ENCODE measurements at regions of chr12 and their contacts with region 1.

Region 1: DNA sequence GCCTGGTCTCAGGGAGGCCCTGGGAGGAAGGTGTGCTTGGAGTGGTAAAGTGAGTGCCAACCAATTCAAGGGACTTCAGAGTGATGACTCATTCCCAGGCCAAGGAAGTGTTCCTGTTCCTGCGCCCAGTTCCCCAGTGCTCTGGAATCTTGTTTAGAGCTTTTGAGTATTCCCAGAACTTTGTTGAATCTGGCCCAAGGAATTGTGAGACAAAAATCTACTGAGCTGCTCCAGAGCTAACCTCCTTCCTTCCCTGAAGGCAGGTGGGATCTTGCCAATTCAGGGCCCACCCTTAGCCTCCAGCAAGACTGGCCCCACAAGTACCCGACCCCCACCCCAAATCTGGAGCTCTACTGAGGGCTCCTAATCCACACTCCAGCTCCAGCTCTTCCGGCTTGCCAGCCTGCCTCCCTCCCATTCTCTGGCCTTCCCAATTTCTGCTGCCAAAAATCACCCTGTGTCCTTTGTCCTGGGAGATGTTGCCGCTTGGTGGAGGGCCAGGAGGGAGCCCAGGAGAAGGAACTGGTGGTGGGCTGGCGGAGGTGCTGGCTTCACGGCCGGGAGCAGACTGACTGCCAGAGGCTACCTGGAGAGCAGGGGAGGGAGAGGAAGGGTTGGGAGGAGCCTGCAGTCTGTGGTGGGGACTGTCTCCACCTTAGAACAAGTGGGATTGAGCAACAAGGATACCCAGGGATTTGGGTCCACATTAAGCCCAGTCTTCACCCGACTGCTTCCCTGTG is 2.0 kb upstream of the ATN1 start:
- DNase-seq: no peak
- H3K4me3 ChIP-seq: no peak overlapping the region
- H3K27ac ChIP-seq: no peak overlapping the region
- H3K4me1 ChIP-seq: peaks cover 48% of the 10 kb centered on the region
- CTCF ChIP-seq: no peak

Region 2: DNA sequence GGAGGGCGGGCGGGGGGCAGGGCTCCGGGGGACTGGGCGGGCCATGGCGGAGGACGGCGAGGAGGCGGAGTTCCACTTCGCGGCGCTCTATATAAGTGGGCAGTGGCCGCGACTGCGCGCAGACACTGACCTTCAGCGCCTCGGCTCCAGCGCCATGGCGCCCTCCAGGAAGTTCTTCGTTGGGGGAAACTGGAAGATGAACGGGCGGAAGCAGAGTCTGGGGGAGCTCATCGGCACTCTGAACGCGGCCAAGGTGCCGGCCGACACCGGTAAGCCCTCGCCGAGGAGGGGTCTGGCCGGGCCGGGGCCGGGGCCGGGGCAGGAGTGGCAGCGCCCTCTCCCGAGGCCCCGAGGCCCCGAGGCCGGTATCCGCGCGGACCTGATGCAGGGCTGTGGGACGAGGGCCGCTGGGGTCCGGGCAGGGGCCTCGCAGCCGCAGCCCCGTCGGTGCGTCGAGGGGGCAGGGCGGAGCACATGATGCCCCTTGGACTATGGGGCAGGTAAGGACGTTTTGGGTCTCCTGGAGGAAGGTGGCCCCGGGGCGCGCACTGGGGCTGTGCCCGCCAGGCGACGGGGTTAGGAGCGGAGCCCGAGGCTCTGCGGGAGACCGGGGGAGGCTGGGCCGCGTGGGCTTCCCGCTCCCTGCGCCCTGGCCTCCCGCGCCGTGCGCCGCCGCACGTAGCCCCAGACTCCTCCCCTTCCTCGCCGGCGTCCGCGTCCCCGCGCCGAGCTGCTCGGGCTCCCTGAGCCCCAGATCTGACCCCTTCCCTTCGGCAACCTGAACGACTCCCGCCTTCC is 58.1 kb before region 1 on chr12 and contains the start of gene TPI1:
- CTCF ChIA-PET with region 1: interaction called, 3 read pairs
- POLR2A ChIA-PET with region 1: interaction called, 6 read pairs
- intact Hi-C with region 1: loop called (anchors 2 kb)
- DNase-seq: peak; percentile 79
- H3K4me3 ChIP-seq: peak within 1 kb of the TSS; percentile 93
- H3K27ac ChIP-seq: peak within 1 kb of the TSS; percentile 66
- H3K4me1 ChIP-seq: peaks cover 51% of the 10 kb centered on the region
- CTCF ChIP-seq: no peak
- total RNA-seq, gene TPI1: 596 and 608 TPM in 2 replicates

Region 3: GRCh38 chr12:6890789-6891645 is 34.7 kb before region 1 on chr12:
- CTCF ChIA-PET with region 1: interaction called, 3 read pairs
- POLR2A ChIA-PET with region 1: interaction called, 3 read pairs
- intact Hi-C with region 1: loop called (anchors 2 kb)
- DNase-seq: peak; percentile 98
- H3K4me3 ChIP-seq: peak overlapping the region; percentile 66
- H3K27ac ChIP-seq: peak overlapping the region; percentile 81
- H3K4me1 ChIP-seq: peaks cover 28% of the 10 kb centered on the region
- CTCF ChIP-seq: peak; percentile 82

Region 4: GRCh38 chr12:6965026-6965661 is 39.4 kb after region 1 on chr12:
- CTCF ChIA-PET with region 1: no interaction called
- POLR2A ChIA-PET with region 1: no interaction called
- intact Hi-C with region 1: loop called (anchors 1 kb)
- DNase-seq: peak; percentile 86
- H3K4me3 ChIP-seq: no peak overlapping the region
- H3K27ac ChIP-seq: peak overlapping the region; percentile 64
- H3K4me1 ChIP-seq: peaks cover 69% of the 10 kb centered on the region
- CTCF ChIP-seq: peak; percentile 98

Region 5: DNA sequence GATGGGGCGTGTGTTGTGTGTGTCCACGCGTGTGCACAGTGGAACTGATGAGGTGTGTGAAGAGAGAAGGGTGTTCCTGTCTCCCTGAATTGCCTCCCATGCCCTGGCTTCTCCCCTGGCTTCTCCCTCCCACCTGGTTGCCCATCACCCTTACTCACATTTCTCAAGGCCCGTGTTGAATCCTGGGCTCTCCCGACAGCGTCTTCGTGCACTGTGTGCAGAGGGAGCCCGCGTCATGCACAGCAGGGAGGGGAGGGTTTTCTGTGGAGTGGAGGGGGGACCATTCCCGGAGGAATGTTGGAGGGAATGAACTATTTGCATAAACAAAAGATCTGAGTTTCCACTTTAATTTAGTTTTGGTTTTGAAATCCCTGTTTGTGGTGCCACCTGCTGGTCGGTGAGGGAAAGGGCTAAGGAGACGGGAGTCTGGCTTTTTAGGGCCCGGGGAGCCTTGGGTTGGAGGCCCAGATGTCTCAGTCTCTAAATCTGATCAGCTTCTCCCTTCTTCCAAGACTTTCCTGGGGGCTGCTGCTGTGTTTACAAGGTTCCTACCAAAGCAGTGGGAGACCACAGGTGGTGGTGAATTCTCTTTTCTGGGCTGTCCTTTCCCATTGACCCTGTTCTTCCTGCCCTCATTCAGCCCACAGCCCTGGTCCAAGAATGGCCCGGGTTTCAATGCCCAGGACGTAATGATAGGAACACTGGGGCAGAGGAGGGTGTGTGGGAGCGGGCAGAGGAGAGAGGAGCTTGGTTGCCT is 166.7 kb after region 1 on chr12 and contains the start of gene C1R:
- CTCF ChIA-PET with region 1: no interaction called
- POLR2A ChIA-PET with region 1: no interaction called
- intact Hi-C with region 1: loop called (anchors 1 kb)
- DNase-seq: peak; percentile 59
- H3K4me3 ChIP-seq: no peak within 1 kb of the TSS
- H3K27ac ChIP-seq: no peak within 1 kb of the TSS
- H3K4me1 ChIP-seq: peaks cover 3% of the 10 kb centered on the region
- CTCF ChIP-seq: peak; percentile 87
- total RNA-seq, gene C1R: not detected in 2 replicates

Region 6: DNA sequence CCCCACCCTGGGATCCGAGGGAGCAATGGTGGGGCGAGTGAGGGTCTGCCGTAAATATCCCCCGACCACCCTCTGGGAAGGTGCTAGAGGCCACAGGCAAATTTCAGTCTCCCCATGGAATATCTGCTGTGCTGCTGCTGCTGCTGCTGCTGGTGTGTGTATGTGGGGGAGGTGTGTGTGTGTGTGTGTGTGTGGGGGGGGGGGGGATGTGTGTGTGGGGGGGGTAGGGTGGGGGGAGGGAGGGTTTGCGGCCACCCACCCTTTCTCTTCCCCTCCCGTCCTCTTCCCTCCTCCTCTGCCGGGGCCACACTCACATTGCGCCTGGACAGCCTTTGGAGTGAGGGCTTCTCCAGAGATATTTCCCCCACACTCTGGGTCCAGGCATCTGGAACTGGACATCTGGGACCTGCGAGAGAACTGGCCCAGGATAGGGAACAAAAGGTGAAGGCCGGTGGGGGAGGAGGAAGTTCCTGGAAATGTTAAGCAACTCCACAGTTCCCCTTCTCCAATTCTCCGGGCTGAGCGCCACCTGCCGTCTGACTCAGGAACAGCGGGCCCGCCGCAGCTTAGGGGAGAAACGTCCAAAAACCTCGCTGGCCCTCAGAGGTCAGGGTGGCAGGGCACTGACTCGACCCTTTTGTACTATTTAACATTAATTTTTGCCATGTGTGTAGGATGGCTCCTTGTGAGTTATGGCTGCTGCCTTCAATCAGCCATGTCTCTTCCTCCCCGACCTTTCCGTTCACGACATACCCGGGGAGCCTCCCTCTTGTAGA is 183.3 kb after region 1 on chr12 and contains the start of gene C1RL:
- CTCF ChIA-PET with region 1: no interaction called
- POLR2A ChIA-PET with region 1: no interaction called
- intact Hi-C with region 1: loop called (anchors 2 kb)
- DNase-seq: peak; percentile 72
- H3K4me3 ChIP-seq: peak within 1 kb of the TSS; percentile 65
- H3K27ac ChIP-seq: no peak within 1 kb of the TSS
- H3K4me1 ChIP-seq: peaks cover 10% of the 10 kb centered on the region
- CTCF ChIP-seq: peak; percentile 91
- total RNA-seq, gene C1RL: 2.9 and 3.0 TPM in 2 replicates

Measured in OCI-LY7 (cell line).